ENCODE measurements at regions of chr1 and their contacts with region 1.

Region 1: GRCh38 chr1:220733090-220733601 is 15.0 kb upstream of the MTARC2 start:
- DNase-seq: peak; percentile 91
- H3K4me3 Mint-ChIP-seq: no peak overlapping the region
- H3K27ac Mint-ChIP-seq: no peak overlapping the region
- H3K4me1 Mint-ChIP-seq: peaks cover 15% of the 10 kb centered on the region
- H3K27me3 Mint-ChIP-seq: no peaks in the 10 kb centered on the region

Region 2: GRCh38 chr1:220189750-220190347 is 543.3 kb before region 1 on chr1:
- CTCF ChIA-PET with region 1: interaction called, 7 read pairs
- intact Hi-C with region 1: loop called (anchors 1 kb)
- DNase-seq: no peak
- H3K4me3 Mint-ChIP-seq: no peak overlapping the region
- H3K27ac Mint-ChIP-seq: no peak overlapping the region
- H3K4me1 Mint-ChIP-seq: no peaks in the 10 kb centered on the region
- H3K27me3 Mint-ChIP-seq: no peaks in the 10 kb centered on the region

Region 3: GRCh38 chr1:220272047-220272840 is 460.9 kb before region 1 on chr1 and contains the start of gene RAB3GAP2:
- CTCF ChIA-PET with region 1: no interaction called
- intact Hi-C with region 1: loop called (anchors 2 kb)
- DNase-seq: peak; percentile 97
- H3K4me3 Mint-ChIP-seq: no peak within 1 kb of the TSS
- H3K27ac Mint-ChIP-seq: no peak within 1 kb of the TSS
- H3K4me1 Mint-ChIP-seq: peaks cover 24% of the 10 kb centered on the region
- H3K27me3 Mint-ChIP-seq: peaks cover 6% of the 10 kb centered on the region
- total RNA-seq, gene RAB3GAP2: 37.3 to 39.6 TPM

Region 4: DNA sequence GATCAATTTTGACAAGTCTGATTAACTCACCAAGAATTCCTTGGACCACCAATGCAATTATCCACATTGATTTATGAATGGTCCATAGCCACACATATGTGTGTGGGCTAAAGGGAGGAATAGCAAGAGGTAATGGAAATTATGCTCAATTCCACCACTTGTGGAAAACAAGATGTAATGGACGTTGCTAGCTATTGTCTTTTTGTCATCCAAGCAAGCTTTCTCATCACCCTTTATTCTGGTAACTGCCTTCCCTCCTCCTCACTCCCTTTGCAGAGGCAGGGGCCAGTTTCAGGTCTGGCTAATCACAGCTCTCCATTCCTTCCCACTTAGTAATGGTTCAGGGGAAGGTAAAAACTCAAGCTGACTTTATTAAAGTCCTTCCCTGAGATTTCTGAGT is 436.2 kb before region 1 on chr1:
- CTCF ChIA-PET with region 1: interaction called, 5 read pairs
- intact Hi-C with region 1: loop called (anchors 1 kb)
- DNase-seq: no peak
- H3K4me3 Mint-ChIP-seq: no peak overlapping the region
- H3K27ac Mint-ChIP-seq: no peak overlapping the region
- H3K4me1 Mint-ChIP-seq: no peaks in the 10 kb centered on the region
- H3K27me3 Mint-ChIP-seq: peaks cover 8% of the 10 kb centered on the region

Region 5: DNA sequence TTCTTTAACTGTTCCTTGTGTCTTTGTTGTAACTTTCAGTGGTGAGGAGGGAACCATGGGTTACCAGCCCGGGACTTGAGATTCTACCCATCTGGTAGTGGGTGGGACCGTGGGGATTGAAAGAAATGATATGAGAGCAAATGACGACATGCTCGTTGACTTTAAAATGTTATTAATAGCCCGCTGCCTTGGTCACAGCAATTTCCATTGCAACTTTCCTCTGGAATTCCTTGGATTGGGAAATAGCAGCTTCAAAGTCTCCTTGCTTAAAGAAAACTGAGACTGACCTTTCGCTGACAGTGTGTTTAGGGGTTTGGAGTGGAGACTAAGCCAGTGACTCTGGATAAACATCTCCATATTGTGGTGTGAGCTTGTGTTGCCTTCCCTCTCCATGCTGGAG is 249.4 kb before region 1 on chr1:
- CTCF ChIA-PET with region 1: no interaction called
- intact Hi-C with region 1: no loop called
- DNase-seq: no peak
- H3K4me3 Mint-ChIP-seq: no peak overlapping the region
- H3K27ac Mint-ChIP-seq: no peak overlapping the region
- H3K4me1 Mint-ChIP-seq: no peaks in the 10 kb centered on the region
- H3K27me3 Mint-ChIP-seq: peaks cover 21% of the 10 kb centered on the region

Region 6: DNA sequence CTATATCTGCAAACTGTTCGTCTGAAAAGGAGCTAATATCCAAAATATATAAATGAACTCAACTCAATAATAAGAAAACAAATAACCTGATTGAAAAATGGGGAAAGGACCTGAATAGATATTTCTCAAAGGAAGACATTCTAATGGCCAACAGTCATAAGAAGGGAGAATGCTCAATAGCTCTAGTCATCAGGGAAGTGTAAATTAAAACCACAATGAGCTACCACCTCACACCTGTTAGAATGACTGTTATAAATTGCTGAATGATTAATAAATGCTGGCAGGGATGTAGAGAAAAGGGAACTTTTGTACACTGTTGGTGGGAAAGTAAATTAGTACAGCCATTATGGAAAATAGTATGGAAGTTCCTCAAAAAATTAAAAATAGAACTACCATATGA is 64.1 kb before region 1 on chr1:
- CTCF ChIA-PET with region 1: no interaction called
- intact Hi-C with region 1: no loop called
- DNase-seq: no peak
- H3K4me3 Mint-ChIP-seq: no peak overlapping the region
- H3K27ac Mint-ChIP-seq: no peak overlapping the region
- H3K4me1 Mint-ChIP-seq: no peaks in the 10 kb centered on the region
- H3K27me3 Mint-ChIP-seq: peaks cover 12% of the 10 kb centered on the region

Region 7: GRCh38 chr1:220690140-220691025 is 42.8 kb before region 1 on chr1 and contains the start of gene C1orf115:
- CTCF ChIA-PET with region 1: interaction called, 6 read pairs
- intact Hi-C with region 1: loop called (anchors 1 kb)
- DNase-seq: peak; percentile 77
- H3K4me3 Mint-ChIP-seq: peak within 1 kb of the TSS; percentile 81
- H3K27ac Mint-ChIP-seq: no peak within 1 kb of the TSS
- H3K4me1 Mint-ChIP-seq: peaks cover 4% of the 10 kb centered on the region
- H3K27me3 Mint-ChIP-seq: peaks cover 5% of the 10 kb centered on the region
- total RNA-seq, gene C1orf115: 1.1 to 1.3 TPM

Measured in activated naive CD4-positive, alpha-beta T cell treated with anti-CD3 and anti-CD28 coated beads for 36 hours (primary cell).